Right cardiac atrium (tissue), 5 donors: ENCODE measurements at regions of chr4 and their contacts with region 1.

Region 1: GRCh38 chr4:165327211-165328100 is at the start of gene MSMO1:
- DNase-seq: peak; percentile 100
- ATAC-seq: peak; percentile 100
- H3K4me3 ChIP-seq: peak within 1 kb of the TSS; percentile 80
- H3K27ac ChIP-seq: peak within 1 kb of the TSS; percentile 58
- H3K4me1 ChIP-seq: no peaks in the 10 kb centered on the region
- H3K27me3 ChIP-seq: no peaks in the 10 kb centered on the region
- total RNA-seq, gene MSMO1: 12.9 to 27.6 (median 16.3) TPM

Region 2: DNA sequence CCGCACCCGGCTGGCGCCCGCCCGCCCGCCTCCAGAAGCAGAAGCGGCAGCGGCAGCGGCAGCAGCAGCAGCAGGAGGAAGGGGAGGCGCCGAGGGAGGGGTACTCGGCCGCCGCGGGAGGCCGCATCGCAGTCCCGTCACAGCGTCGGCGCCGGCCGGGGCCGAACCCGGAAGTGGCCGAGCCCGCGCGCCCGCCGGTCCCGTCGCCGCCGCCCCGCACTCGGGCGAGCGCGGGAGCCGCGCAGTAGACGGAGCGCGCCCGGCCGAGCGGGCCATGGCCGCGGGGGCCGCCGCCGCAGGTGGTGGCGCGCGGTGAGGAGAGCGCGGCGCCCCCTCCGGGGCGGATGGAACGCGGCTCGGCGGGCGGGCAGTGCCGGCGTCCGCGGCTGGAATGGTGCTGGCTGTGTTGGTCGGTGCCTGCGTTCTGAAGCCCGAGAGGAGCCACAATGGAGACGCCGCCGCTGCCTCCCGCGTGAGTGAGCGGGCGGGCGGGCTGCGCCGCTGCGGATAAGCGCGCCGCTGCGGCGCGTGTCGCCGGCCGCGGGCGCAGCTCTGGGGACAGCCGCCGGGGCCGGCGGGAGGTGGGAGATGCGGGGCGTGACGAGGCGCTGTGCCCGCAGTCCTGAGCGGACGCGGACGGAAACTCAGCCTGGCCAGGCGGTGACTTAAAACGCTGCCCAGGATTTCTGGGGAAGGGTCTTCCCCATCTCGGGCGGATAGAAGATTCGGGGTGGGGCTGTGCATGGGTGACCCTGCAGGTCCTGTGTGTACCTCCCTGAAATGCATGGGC is 119.8 kb before region 1 on chr4 and contains the start of gene KLHL2:
- intact Hi-C with region 1: loop called in 2 of 4 experiments (anchors 10 kb)
- DNase-seq: peak; percentile 87 to 94 (median 93)
- ATAC-seq: peak; percentile 97 to 98
- H3K4me3 ChIP-seq: peak within 1 kb of the TSS; percentile 93
- H3K27ac ChIP-seq: peak within 1 kb of the TSS; percentile 82
- H3K4me1 ChIP-seq: peaks cover 2% of the 10 kb centered on the region
- H3K27me3 ChIP-seq: no peaks in the 10 kb centered on the region
- total RNA-seq, gene KLHL2: 10.0 to 15.5 (median 10.9) TPM

Region 3: GRCh38 chr4:165716472-165716871 is 389.0 kb after region 1 on chr4:
- intact Hi-C with region 1: no loop called
- DNase-seq: peak in 2 of 3 donors; percentile 58 to 63
- ATAC-seq: peak; percentile 41 to 64
- H3K4me3 ChIP-seq: no peak overlapping the region
- H3K27ac ChIP-seq: no peak overlapping the region
- H3K4me1 ChIP-seq: no peaks in the 10 kb centered on the region
- H3K27me3 ChIP-seq: no peaks in the 10 kb centered on the region